Mammary epithelial cell (primary cell): ENCODE measurements at regions of chrX and their contacts with region 1.

Region 1: DNA sequence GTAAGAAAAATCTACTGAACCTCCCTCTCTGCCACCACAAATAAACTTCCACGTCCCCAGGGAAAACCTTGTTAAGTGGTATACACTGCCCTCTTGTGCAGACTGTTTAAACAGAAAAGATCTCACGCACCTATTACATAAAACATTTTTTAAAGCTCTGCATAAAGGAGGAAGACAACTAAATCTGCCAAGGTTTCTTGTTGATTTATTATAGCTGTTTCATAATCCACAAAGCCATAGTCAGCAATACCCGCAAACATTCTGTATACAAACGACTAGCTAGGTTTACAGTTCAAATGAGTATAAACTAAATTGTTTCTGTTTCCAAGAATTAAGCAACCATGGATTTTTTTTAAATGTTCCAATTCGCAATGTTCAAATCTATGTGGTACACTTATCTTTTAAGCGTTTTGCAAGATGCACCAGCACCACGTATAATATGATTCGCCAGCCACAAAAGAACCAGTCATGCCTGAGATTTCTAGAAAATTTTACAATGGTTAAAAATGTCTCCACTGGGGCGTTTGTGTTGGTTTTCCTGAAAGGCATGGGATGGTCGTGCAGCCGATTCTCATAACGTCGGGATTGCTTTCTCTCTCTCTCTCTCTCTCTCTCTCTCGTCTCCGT is 164.6 kb downstream of the PRKX start:
- DNase-seq: peak; percentile 34
- H3K4me3 ChIP-seq: peak overlapping the region; percentile 12 to 35 (median 27)
- H3K27ac ChIP-seq: no peak overlapping the region
- H3K4me1 ChIP-seq: peaks cover 8% of the 10 kb centered on the region
- H3K27me3 ChIP-seq: no peaks in the 10 kb centered on the region
- CTCF ChIP-seq: peak; percentile 22 to 47

Region 2: DNA sequence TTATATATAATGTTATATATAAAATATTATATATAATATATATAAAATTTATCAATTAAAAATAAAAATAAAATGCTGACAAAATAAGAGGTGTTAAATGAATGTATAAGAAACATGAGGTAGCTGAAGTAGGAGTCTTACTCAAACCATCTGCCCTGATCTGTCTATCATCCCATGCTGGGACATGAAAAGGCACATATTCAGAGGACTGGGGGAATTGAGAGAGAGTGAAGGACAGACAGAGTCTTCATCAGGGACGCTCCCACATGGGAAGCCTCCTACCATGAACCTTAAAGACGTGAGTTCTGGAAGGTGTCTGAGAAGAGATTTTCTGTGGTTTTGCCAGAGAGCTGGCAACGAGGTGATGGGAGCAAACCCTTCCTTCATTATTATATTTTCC is 511.7 kb before region 1 on chrX:
- CTCF ChIA-PET with region 1: interaction called, 3 read pairs
- dilution Hi-C with region 1: no loop called
- in situ Hi-C with region 1: no loop called
- intact Hi-C with region 1: loop called (anchors 5 kb)
- DNase-seq: no peak
- H3K4me3 ChIP-seq: no peak overlapping the region
- H3K27ac ChIP-seq: no peak overlapping the region
- H3K4me1 ChIP-seq: no peaks in the 10 kb centered on the region
- H3K27me3 ChIP-seq: no peaks in the 10 kb centered on the region
- CTCF ChIP-seq: no peak

Region 3: DNA sequence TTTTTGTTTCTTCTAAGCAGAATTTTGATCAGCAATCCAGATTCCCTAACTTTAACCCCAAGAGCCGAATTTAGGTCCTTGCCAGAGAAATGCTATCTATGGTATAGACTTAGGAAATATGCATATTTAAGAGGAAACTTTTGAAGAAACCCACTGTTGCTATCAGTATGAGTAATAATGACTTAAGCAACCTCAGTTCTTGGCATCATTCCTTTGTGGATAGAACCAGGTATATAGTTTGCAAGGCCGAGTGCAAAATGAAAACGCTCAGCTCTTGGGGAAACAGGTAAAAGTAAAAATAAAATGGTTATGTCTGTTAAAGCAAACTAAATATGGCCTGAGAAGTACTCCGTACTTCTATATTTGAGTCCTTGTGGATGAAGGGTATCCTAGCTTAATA is 429.5 kb before region 1 on chrX:
- CTCF ChIA-PET with region 1: interaction called, 8 read pairs
- dilution Hi-C with region 1: no loop called
- in situ Hi-C with region 1: no loop called
- intact Hi-C with region 1: loop called (anchors 2 kb)
- DNase-seq: no peak
- H3K4me3 ChIP-seq: no peak overlapping the region
- H3K27ac ChIP-seq: no peak overlapping the region
- H3K4me1 ChIP-seq: no peaks in the 10 kb centered on the region
- H3K27me3 ChIP-seq: no peaks in the 10 kb centered on the region
- CTCF ChIP-seq: no peak

Region 4: GRCh38 chrX:3244955-3245354 is 303.9 kb before region 1 on chrX:
- CTCF ChIA-PET with region 1: interaction called, 5 read pairs
- dilution Hi-C with region 1: no loop called
- in situ Hi-C with region 1: loop called in 1 of 2 experiments (anchors 10 kb)
- intact Hi-C with region 1: loop called (anchors 1 kb)
- DNase-seq: peak; percentile 9
- H3K4me3 ChIP-seq: no peak overlapping the region
- H3K27ac ChIP-seq: no peak overlapping the region
- H3K4me1 ChIP-seq: no peaks in the 10 kb centered on the region
- H3K27me3 ChIP-seq: no peaks in the 10 kb centered on the region
- CTCF ChIP-seq: peak; percentile 34 to 53

Region 5: GRCh38 chrX:3345281-3346191 is 203.3 kb before region 1 on chrX:
- CTCF ChIA-PET with region 1: interaction called, 4 read pairs
- dilution Hi-C with region 1: no loop called
- in situ Hi-C with region 1: no loop called
- intact Hi-C with region 1: loop called (anchors 1 kb)
- DNase-seq: peak; percentile 63
- H3K4me3 ChIP-seq: peak overlapping the region; percentile 34 to 46 (median 36)
- H3K27ac ChIP-seq: no peak overlapping the region
- H3K4me1 ChIP-seq: no peaks in the 10 kb centered on the region
- H3K27me3 ChIP-seq: no peaks in the 10 kb centered on the region
- CTCF ChIP-seq: no peak

Region 6: GRCh38 chrX:3403748-3404147 is 145.1 kb before region 1 on chrX:
- CTCF ChIA-PET with region 1: no interaction called
- dilution Hi-C with region 1: no loop called
- in situ Hi-C with region 1: no loop called
- intact Hi-C with region 1: no loop called
- DNase-seq: no peak
- H3K4me3 ChIP-seq: no peak overlapping the region
- H3K27ac ChIP-seq: no peak overlapping the region
- H3K4me1 ChIP-seq: no peaks in the 10 kb centered on the region
- H3K27me3 ChIP-seq: no peaks in the 10 kb centered on the region
- CTCF ChIP-seq: no peak